SK-N-SH (cell line): ENCODE measurements at regions of chr10 and their contacts with region 1.

Region 1: GRCh38 chr10:70146489-70147258 is at the start of gene TYSND1:
- DNase-seq: peak; percentile 96
- H3K4me3 ChIP-seq: peak within 1 kb of the TSS; percentile 68 to 71
- H3K27ac ChIP-seq: peak within 1 kb of the TSS; percentile 91 to 92
- H3K4me1 ChIP-seq: peaks cover 5 to 27% of the 10 kb centered on the region in 2 experiments; a peak in 3 of 4 replicates
- H3K27me3 ChIP-seq: no peaks in the 10 kb centered on the region
- CTCF ChIP-seq: peak; percentile 60
- EP300 ChIP-seq: no peak; a peak in 1 of 4 replicates
- RAD21 ChIP-seq: peak; percentile 73
- polyA plus RNA-seq, gene TYSND1: 7.2 and 7.4 TPM in 2 replicates

Region 2: GRCh38 chr10:69957886-69958555 is 188.7 kb before region 1 on chr10:
- CTCF ChIA-PET with region 1: interaction called, 20 read pairs
- POLR2A ChIA-PET with region 1: no interaction called
- DNase-seq: peak; percentile 73
- H3K4me3 ChIP-seq: no peak overlapping the region
- H3K27ac ChIP-seq: no peak overlapping the region
- H3K4me1 ChIP-seq: peaks cover 0 to 5% of the 10 kb centered on the region in 2 experiments; a peak in 1 of 4 replicates
- H3K27me3 ChIP-seq: no peaks in the 10 kb centered on the region
- CTCF ChIP-seq: peak; percentile 81
- EP300 ChIP-seq: no peak
- RAD21 ChIP-seq: peak; percentile 69

Region 3: GRCh38 chr10:70052462-70053217 is 94.0 kb before region 1 on chr10 and contains the start of gene MACROH2A2:
- CTCF ChIA-PET with region 1: interaction called, 11 read pairs
- POLR2A ChIA-PET with region 1: no interaction called
- DNase-seq: peak; percentile 89
- H3K4me3 ChIP-seq: peak within 1 kb of the TSS; percentile 80 to 91
- H3K27ac ChIP-seq: peak within 1 kb of the TSS; percentile 57 to 92
- H3K4me1 ChIP-seq: peaks cover 8 to 14% of the 10 kb centered on the region in 2 experiments; a peak in 3 of 4 replicates
- H3K27me3 ChIP-seq: no peaks in the 10 kb centered on the region
- CTCF ChIP-seq: peak; percentile 53
- EP300 ChIP-seq: no peak
- RAD21 ChIP-seq: peak; percentile 49
- polyA plus RNA-seq, gene MACROH2A2: 21.7 and 28.9 TPM in 2 replicates

Region 4: GRCh38 chr10:70122742-70123141 is 23.9 kb before region 1 on chr10:
- CTCF ChIA-PET with region 1: interaction called, 157 read pairs
- POLR2A ChIA-PET with region 1: interaction called, 3 read pairs
- DNase-seq: no peak
- H3K4me3 ChIP-seq: no peak overlapping the region
- H3K27ac ChIP-seq: no peak overlapping the region
- H3K4me1 ChIP-seq: peaks cover 0 to 3% of the 10 kb centered on the region in 2 experiments; a peak in 1 of 4 replicates
- H3K27me3 ChIP-seq: no peaks in the 10 kb centered on the region
- CTCF ChIP-seq: no peak
- EP300 ChIP-seq: no peak
- RAD21 ChIP-seq: no peak

Region 5: GRCh38 chr10:70169649-70170364 is 23.1 kb after region 1 on chr10:
- CTCF ChIA-PET with region 1: interaction called, 18 read pairs
- POLR2A ChIA-PET with region 1: interaction called, 10 read pairs
- DNase-seq: peak; percentile 41
- H3K4me3 ChIP-seq: peak overlapping the region; percentile 86 to 92
- H3K27ac ChIP-seq: peak overlapping the region; percentile 69 to 88
- H3K4me1 ChIP-seq: peaks cover 0 to 5% of the 10 kb centered on the region in 2 experiments; a peak in 2 of 4 replicates
- H3K27me3 ChIP-seq: no peaks in the 10 kb centered on the region
- CTCF ChIP-seq: no peak
- EP300 ChIP-seq: no peak
- RAD21 ChIP-seq: no peak